HCT116 (cell line): ENCODE measurements at regions of chr2 and their contacts with region 1.

Region 1: DNA sequence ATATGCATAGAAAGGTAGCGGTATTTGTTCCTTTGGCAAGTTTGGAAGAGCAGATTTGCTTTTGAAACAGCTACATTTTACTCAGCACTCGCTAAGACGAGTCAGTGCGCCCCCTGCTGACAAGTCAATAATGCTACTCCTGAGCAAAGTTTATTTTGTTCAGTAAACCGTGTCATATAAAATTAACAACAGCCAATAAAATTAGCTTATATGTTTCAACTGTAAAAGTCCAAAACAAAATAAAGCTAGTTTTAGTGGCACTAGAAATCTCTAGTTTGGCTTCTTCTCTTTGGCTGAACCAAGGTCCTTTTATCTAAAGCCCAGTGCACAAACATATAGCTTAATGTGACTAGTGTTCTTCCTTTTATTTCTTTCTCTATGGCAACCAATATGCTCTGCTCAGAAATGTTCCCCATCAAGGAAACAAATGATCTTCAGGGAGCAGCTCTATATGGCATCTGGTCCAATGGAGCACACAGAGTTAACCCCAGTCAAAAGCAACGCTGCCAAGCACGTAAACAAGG is 4.2 kb upstream of the POU3F3 start:
- DNase-seq: peak; percentile 38
- ATAC-seq: peak; percentile 69
- H3K4me3 ChIP-seq: no peak overlapping the region
- H3K27ac ChIP-seq: no peak overlapping the region
- H3K4me1 ChIP-seq: no peaks in the 10 kb centered on the region
- H3K27me3 ChIP-seq: peaks cover 6% of the 10 kb centered on the region; the same call in 1 of the 2 replicates
- CTCF ChIP-seq: peak; percentile 26 to 89 (median 72); a peak in 4 of 6 replicates
- POLR2A ChIP-seq: no peak
- RAD21 ChIP-seq: peak; percentile 57

Region 2: GRCh38 chr2:102975996-102976975 is 1873.4 kb before region 1 on chr2:
- CTCF ChIA-PET with region 1: interaction called, 3 read pairs
- POLR2A ChIA-PET with region 1: no interaction called
- RAD21 ChIA-PET with region 1: no interaction called
- intact Hi-C with region 1: loop called (anchors 5 kb)
- DNase-seq: peak; percentile 16
- ATAC-seq: peak; percentile 84
- H3K4me3 ChIP-seq: no peak overlapping the region
- H3K27ac ChIP-seq: no peak overlapping the region
- H3K4me1 ChIP-seq: no peaks in the 10 kb centered on the region
- H3K27me3 ChIP-seq: 0 out of 2 replicates have a peak, but pooled peaks cover 4% of the 10 kb centered on the region
- CTCF ChIP-seq: peak; percentile 19 to 69 (median 62); a peak in 5 of 6 replicates
- POLR2A ChIP-seq: no peak
- RAD21 ChIP-seq: peak; percentile 63

Region 3: DNA sequence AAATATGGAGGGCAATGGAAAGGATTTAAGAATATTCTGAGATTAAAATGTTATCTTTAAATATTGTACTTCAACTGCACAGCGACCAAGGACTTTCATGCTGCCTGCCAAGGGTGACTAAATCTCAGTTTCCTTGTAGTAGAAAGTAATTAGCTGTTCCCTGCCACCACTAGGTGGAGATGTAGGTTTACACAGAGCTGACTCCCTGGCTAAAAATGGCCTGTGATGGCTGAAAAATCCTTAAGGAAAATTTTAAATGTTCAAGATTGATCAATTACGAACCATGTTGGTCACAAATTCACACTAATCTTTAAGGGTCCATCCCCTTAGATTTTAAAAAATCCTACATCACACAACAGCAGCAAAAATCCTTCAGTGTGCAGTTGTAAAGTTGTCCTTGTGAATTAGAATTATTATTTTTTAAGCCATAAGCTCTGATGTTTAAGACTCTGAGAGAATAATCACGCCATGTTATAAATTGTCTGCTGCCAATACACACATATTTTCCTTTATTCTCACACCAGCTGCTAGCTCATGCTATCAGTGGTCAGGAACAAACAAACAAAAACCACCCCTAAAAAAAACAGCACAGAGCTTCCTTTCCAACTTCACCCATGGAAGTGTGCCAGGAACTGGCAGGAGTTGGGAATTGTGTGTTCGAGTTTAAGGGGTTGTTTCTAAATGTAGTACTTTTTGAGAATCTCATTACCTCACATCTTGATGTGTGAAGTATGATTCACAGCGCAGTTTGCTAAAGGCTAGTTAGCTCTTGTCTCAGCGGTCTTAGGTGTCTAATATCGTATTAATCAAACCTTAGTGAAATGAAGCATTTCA is 1688.0 kb before region 1 on chr2:
- CTCF ChIA-PET with region 1: interaction called, 18 read pairs
- POLR2A ChIA-PET with region 1: no interaction called
- RAD21 ChIA-PET with region 1: no interaction called
- intact Hi-C with region 1: loop called (anchors 2 kb)
- DNase-seq: peak; percentile 16
- ATAC-seq: no peak
- H3K4me3 ChIP-seq: no peak overlapping the region
- H3K27ac ChIP-seq: no peak overlapping the region
- H3K4me1 ChIP-seq: no peaks in the 10 kb centered on the region
- H3K27me3 ChIP-seq: no peaks in the 10 kb centered on the region
- CTCF ChIP-seq: peak; percentile 24 to 66 (median 65); a peak in 5 of 6 replicates
- POLR2A ChIP-seq: no peak
- RAD21 ChIP-seq: peak; percentile 56

Region 4: GRCh38 chr2:104836265-104836664 is 13.4 kb before region 1 on chr2:
- CTCF ChIA-PET with region 1: interaction called, 14 read pairs
- POLR2A ChIA-PET with region 1: no interaction called
- RAD21 ChIA-PET with region 1: no interaction called
- intact Hi-C with region 1: no loop called
- DNase-seq: no peak
- ATAC-seq: no peak
- H3K4me3 ChIP-seq: no peak overlapping the region
- H3K27ac ChIP-seq: no peak overlapping the region
- H3K4me1 ChIP-seq: no peaks in the 10 kb centered on the region
- H3K27me3 ChIP-seq: no peaks in the 10 kb centered on the region
- CTCF ChIP-seq: no peak
- POLR2A ChIP-seq: no peak
- RAD21 ChIP-seq: no peak

Region 5: GRCh38 chr2:104860451-104860790 is 10.7 kb after region 1 on chr2:
- CTCF ChIA-PET with region 1: interaction called, 15 read pairs
- POLR2A ChIA-PET with region 1: no interaction called
- RAD21 ChIA-PET with region 1: no interaction called
- intact Hi-C with region 1: no loop called
- DNase-seq: no peak
- ATAC-seq: no peak
- H3K4me3 ChIP-seq: no peak overlapping the region
- H3K27ac ChIP-seq: no peak overlapping the region
- H3K4me1 ChIP-seq: no peaks in the 10 kb centered on the region
- H3K27me3 ChIP-seq: no peaks in the 10 kb centered on the region
- CTCF ChIP-seq: no peak
- POLR2A ChIP-seq: no peak
- RAD21 ChIP-seq: no peak

Region 6: GRCh38 chr2:104944495-104944894 is 94.8 kb after region 1 on chr2:
- CTCF ChIA-PET with region 1: interaction called, 11 read pairs
- POLR2A ChIA-PET with region 1: no interaction called
- RAD21 ChIA-PET with region 1: interaction called in 1 of 2 experiments, 4 read pairs
- intact Hi-C with region 1: no loop called
- DNase-seq: peak; percentile 35
- ATAC-seq: peak; percentile 72
- H3K4me3 ChIP-seq: no peak overlapping the region
- H3K27ac ChIP-seq: no peak overlapping the region
- H3K4me1 ChIP-seq: no peaks in the 10 kb centered on the region
- H3K27me3 ChIP-seq: 0 out of 2 replicates have a peak, but pooled peaks cover 4% of the 10 kb centered on the region
- CTCF ChIP-seq: peak; percentile 55 to 76 (median 64); a peak in 5 of 6 replicates
- POLR2A ChIP-seq: no peak
- RAD21 ChIP-seq: peak; percentile 83